CD4-positive, alpha-beta T cell (primary cell): ENCODE measurements at regions of chr6 and their contacts with region 1.

Region 1: GRCh38 chr6:26031595-26032339 is 55.5 kb upstream of the HFE start:
- DNase-seq: peak; percentile 73 to 94 (median 81)
- ATAC-seq: peak; percentile 65
- H3K4me3 ChIP-seq: peak overlapping the region; percentile 64
- H3K4me3 Mint-ChIP-seq: peak overlapping the region; percentile 97
- H3K27ac ChIP-seq: peak overlapping the region; percentile 42 to 72
- H3K27ac Mint-ChIP-seq: peak overlapping the region; percentile 99
- H3K4me1 ChIP-seq: peaks cover 35% of the 10 kb centered on the region
- H3K4me1 Mint-ChIP-seq: peaks cover 46% of the 10 kb centered on the region
- H3K27me3 ChIP-seq: no peaks in the 10 kb centered on the region
- H3K27me3 Mint-ChIP-seq: no peaks in the 10 kb centered on the region
- CTCF ChIP-seq: peak; percentile 22

Region 2: DNA sequence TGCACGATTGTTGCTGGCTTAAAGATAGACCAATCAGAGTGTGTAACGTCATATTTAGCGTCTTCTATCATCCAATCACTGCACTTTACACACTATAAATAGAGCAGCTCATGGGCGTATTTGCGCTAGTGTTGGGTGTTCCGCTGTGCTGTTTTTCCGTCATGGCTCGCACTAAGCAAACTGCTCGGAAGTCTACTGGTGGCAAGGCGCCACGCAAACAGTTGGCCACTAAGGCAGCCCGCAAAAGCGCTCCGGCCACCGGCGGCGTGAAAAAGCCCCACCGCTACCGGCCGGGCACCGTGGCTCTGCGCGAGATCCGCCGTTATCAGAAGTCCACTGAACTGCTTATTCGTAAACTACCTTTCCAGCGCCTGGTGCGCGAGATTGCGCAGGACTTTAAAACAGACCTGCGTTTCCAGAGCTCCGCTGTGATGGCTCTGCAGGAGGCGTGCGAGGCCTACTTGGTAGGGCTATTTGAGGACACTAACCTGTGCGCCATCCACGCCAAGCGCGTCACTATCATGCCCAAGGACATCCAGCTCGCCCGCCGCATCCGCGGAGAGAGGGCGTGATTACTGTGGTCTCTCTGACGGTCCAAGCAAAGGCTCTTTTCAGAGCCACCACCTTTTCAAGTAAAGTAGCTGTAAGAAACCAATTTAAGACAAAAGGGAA is 11.3 kb before region 1 on chr6:
- CTCF ChIA-PET with region 1: interaction called, 26 read pairs
- POLR2A ChIA-PET with region 1: interaction called, 313 read pairs
- intact Hi-C with region 1: no loop called
- DNase-seq: peak; percentile 63 to 96 (median 78)
- ATAC-seq: peak; percentile 50
- H3K4me3 ChIP-seq: peak overlapping the region; percentile 73
- H3K4me3 Mint-ChIP-seq: peak overlapping the region; percentile 95
- H3K27ac ChIP-seq: peak overlapping the region; percentile 95 to 96
- H3K27ac Mint-ChIP-seq: peak overlapping the region; percentile 97
- H3K4me1 ChIP-seq: peaks cover 38% of the 10 kb centered on the region
- H3K4me1 Mint-ChIP-seq: peaks cover 41% of the 10 kb centered on the region
- H3K27me3 ChIP-seq: no peaks in the 10 kb centered on the region
- H3K27me3 Mint-ChIP-seq: no peaks in the 10 kb centered on the region
- CTCF ChIP-seq: no peak

Region 3: DNA sequence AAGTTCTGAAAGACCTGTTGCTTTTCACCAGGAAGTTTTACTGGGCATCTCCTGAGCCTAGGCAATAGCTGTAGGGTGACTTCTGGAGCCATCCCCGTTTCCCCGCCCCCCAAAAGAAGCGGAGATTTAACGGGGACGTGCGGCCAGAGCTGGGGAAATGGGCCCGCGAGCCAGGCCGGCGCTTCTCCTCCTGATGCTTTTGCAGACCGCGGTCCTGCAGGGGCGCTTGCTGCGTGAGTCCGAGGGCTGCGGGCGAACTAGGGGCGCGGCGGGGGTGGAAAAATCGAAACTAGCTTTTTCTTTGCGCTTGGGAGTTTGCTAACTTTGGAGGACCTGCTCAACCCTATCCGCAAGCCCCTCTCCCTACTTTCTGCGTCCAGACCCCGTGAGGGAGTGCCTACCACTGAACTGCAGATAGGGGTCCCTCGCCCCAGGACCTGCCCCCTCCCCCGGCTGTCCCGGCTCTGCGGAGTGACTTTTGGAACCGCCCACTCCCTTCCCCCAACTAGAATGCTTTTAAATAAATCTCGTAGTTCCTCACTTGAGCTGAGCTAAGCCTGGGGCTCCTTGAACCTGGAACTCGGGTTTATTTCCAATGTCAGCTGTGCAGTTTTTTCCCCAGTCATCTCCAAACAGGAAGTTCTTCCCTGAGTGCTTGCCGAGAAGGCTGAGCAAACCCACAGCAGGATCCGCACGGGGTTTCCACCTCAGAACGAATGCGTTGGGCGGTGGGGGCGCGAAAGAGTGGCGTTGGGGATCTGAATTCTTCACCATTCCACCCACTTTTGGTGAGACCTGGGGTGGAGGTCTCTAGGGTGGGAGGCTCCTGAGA is 55.7 kb after region 1 on chr6 and contains the start of gene HFE:
- CTCF ChIA-PET with region 1: interaction called, 11 read pairs
- POLR2A ChIA-PET with region 1: interaction called, 24 read pairs
- intact Hi-C with region 1: no loop called
- DNase-seq: peak in 11 of 14 experiments; percentile 3 to 57 (median 21)
- ATAC-seq: peak; percentile 25
- H3K4me3 ChIP-seq: peak within 1 kb of the TSS; percentile 86
- H3K4me3 Mint-ChIP-seq: peak within 1 kb of the TSS; percentile 87
- H3K27ac ChIP-seq: peak within 1 kb of the TSS; percentile 23 to 61
- H3K27ac Mint-ChIP-seq: peak within 1 kb of the TSS; percentile 71
- H3K4me1 ChIP-seq: peaks cover 33% of the 10 kb centered on the region
- H3K4me1 Mint-ChIP-seq: peaks cover 34% of the 10 kb centered on the region
- H3K27me3 ChIP-seq: no peaks in the 10 kb centered on the region
- H3K27me3 Mint-ChIP-seq: no peaks in the 10 kb centered on the region
- CTCF ChIP-seq: no peak
- total RNA-seq, gene HFE: 0.08 to 0.28 TPM

Region 4: GRCh38 chr6:26175428-26176181 is 143.8 kb after region 1 on chr6:
- CTCF ChIA-PET with region 1: no interaction called
- POLR2A ChIA-PET with region 1: interaction called, 21 read pairs
- intact Hi-C with region 1: no loop called
- DNase-seq: peak in 11 of 14 experiments; percentile 13 to 85 (median 54)
- ATAC-seq: no peak
- H3K4me3 ChIP-seq: no peak overlapping the region
- H3K4me3 Mint-ChIP-seq: peak overlapping the region; percentile 83
- H3K27ac ChIP-seq: peak overlapping the region in 1 of 2 donors; percentile 41
- H3K27ac Mint-ChIP-seq: peak overlapping the region; percentile 93
- H3K4me1 ChIP-seq: peaks cover 17% of the 10 kb centered on the region
- H3K4me1 Mint-ChIP-seq: peaks cover 53% of the 10 kb centered on the region
- H3K27me3 ChIP-seq: no peaks in the 10 kb centered on the region
- H3K27me3 Mint-ChIP-seq: no peaks in the 10 kb centered on the region
- CTCF ChIP-seq: peak; percentile 87

Region 5: DNA sequence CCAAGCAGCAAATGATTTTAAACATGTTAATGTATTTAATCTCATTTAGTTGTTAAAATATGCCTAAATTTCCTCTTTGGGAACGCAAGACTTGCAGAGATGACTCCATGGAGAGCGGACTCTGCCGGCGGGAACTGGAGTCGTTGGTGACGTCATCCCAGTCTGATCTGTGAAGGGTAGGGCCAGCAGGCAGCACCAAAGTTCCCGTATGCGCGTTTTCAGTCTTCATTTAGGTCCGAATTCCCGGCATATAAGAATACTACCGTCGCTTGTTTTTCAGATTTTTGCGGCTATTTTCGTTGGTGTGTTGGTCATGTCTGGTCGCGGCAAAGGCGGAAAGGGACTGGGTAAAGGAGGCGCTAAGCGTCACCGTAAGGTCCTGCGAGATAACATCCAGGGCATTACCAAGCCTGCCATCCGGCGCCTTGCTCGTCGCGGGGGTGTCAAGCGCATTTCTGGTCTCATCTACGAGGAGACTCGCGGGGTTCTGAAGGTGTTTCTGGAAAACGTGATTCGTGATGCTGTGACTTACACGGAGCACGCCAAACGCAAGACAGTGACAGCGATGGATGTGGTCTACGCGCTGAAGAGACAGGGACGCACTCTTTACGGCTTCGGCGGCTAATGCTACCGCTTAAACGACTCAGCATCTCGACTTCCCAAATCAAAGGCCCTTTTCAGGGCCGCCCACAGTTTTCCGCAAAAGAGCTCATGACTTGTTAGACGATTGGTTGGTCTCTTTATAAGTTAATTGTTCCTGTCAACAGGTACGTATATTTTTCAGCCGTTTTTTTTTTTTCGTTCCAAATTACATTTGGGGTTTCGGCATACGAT is 172.8 kb after region 1 on chr6:
- CTCF ChIA-PET with region 1: no interaction called
- POLR2A ChIA-PET with region 1: interaction called, 101 read pairs
- intact Hi-C with region 1: loop called (anchors 5 kb)
- DNase-seq: peak; percentile 73 to 98 (median 80)
- ATAC-seq: peak; percentile 69
- H3K4me3 ChIP-seq: peak overlapping the region; percentile 68
- H3K4me3 Mint-ChIP-seq: no peak overlapping the region
- H3K27ac ChIP-seq: peak overlapping the region; percentile 89 to 90
- H3K27ac Mint-ChIP-seq: no peak overlapping the region
- H3K4me1 ChIP-seq: peaks cover 34% of the 10 kb centered on the region
- H3K4me1 Mint-ChIP-seq: peaks cover 8% of the 10 kb centered on the region
- H3K27me3 ChIP-seq: no peaks in the 10 kb centered on the region
- H3K27me3 Mint-ChIP-seq: no peaks in the 10 kb centered on the region
- CTCF ChIP-seq: peak; percentile 32

Region 6: GRCh38 chr6:27864906-27865849 is 1833.4 kb after region 1 on chr6:
- CTCF ChIA-PET with region 1: interaction called, 3 read pairs
- POLR2A ChIA-PET with region 1: interaction called, 23 read pairs
- intact Hi-C with region 1: no loop called
- DNase-seq: peak in 13 of 14 experiments; percentile 35 to 97 (median 61)
- ATAC-seq: peak; percentile 83
- H3K4me3 ChIP-seq: peak overlapping the region; percentile 59
- H3K4me3 Mint-ChIP-seq: peak overlapping the region; percentile 100
- H3K27ac ChIP-seq: peak overlapping the region; percentile 54 to 78
- H3K27ac Mint-ChIP-seq: peak overlapping the region; percentile 93
- H3K4me1 ChIP-seq: peaks cover 38% of the 10 kb centered on the region
- H3K4me1 Mint-ChIP-seq: peaks cover 41% of the 10 kb centered on the region
- H3K27me3 ChIP-seq: no peaks in the 10 kb centered on the region
- H3K27me3 Mint-ChIP-seq: peaks cover 3% of the 10 kb centered on the region
- CTCF ChIP-seq: no peak